ENCODE measurements at regions of chr6 and their contacts with region 1.

Region 1: GRCh38 chr6:28981833-28982475 is 23.2 kb downstream of the ZNF311 start:
- DNase-seq: peak; percentile 82
- ATAC-seq: peak; percentile 27
- H3K4me3 ChIP-seq: peak overlapping the region; percentile 92
- H3K27ac ChIP-seq: peak overlapping the region; percentile 11; the same call in 1 of the 2 replicates
- H3K4me1 ChIP-seq: peaks cover 39% of the 10 kb centered on the region
- H3K27me3 ChIP-seq: no peaks in the 10 kb centered on the region
- CTCF ChIP-seq: no peak

Region 2: GRCh38 chr6:28863604-28864320 is 118.2 kb before region 1 on chr6:
- CTCF ChIA-PET with region 1: no interaction called
- POLR2A ChIA-PET with region 1: no interaction called
- intact Hi-C with region 1: loop called (anchors 2 kb)
- DNase-seq: peak; percentile 91
- ATAC-seq: peak; percentile 61
- H3K4me3 ChIP-seq: peak overlapping the region; percentile 87
- H3K27ac ChIP-seq: peak overlapping the region; percentile 22; the same call in 1 of the 2 replicates
- H3K4me1 ChIP-seq: peaks cover 29% of the 10 kb centered on the region
- H3K27me3 ChIP-seq: no peaks in the 10 kb centered on the region
- CTCF ChIP-seq: no peak

Region 3: GRCh38 chr6:28895134-28895812 is 86.7 kb before region 1 on chr6:
- CTCF ChIA-PET with region 1: interaction called, 3 read pairs
- POLR2A ChIA-PET with region 1: interaction called, 9 read pairs
- intact Hi-C with region 1: loop called (anchors 1 kb)
- DNase-seq: peak; percentile 98
- ATAC-seq: peak; percentile 62
- H3K4me3 ChIP-seq: peak overlapping the region; percentile 83
- H3K27ac ChIP-seq: peak overlapping the region; percentile 80
- H3K4me1 ChIP-seq: peaks cover 10% of the 10 kb centered on the region
- H3K27me3 ChIP-seq: no peaks in the 10 kb centered on the region
- CTCF ChIP-seq: no peak

Region 4: DNA sequence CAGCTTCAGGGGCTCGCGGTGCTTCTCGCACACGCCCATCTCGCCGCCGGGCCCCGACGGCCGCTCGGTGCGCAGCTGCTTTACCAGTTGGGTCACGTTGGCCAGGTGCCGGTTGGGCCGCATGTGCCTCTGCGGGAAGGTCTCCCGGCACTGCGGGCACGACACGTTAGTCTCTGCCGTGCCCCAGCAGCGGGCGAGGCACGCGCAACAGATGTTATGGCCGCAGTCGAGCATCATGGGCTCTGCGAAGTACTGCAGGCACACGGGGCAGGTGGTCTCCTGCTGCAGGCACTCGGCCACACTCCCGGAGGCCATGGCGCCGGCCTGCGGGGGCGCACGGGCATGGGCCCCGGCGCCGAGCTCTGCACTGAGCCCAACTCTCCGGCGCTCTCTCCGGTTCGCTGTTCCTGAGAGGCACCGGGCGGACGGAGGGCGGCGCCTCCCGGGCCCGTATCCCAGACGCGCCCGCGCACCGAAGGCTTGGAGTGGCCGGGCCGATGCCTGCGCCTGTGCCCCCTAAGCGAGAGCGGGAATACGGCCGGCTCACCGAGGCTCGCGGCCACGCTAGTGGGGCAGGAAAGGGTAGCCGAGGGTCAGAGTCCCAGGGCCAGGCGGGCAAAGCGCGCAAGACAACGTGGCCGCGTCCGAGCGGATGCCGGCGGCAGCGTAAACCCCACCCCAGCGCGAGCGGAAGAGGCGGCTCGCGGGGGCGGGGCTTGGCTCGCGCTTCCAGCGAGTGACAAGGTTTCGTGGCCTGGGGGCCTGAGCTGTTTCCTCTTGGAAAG is 58.4 kb before region 1 on chr6 and contains the start of gene TRIM27:
- CTCF ChIA-PET with region 1: no interaction called
- POLR2A ChIA-PET with region 1: no interaction called
- intact Hi-C with region 1: loop called (anchors 1 kb)
- DNase-seq: peak; percentile 95
- ATAC-seq: peak; percentile 72
- H3K4me3 ChIP-seq: peak within 1 kb of the TSS; percentile 86
- H3K27ac ChIP-seq: peak within 1 kb of the TSS; percentile 82
- H3K4me1 ChIP-seq: peaks cover 23% of the 10 kb centered on the region
- H3K27me3 ChIP-seq: no peaks in the 10 kb centered on the region
- CTCF ChIP-seq: no peak
- total RNA-seq, gene TRIM27: 85.8 and 92.5 TPM in 2 replicates

Region 5: DNA sequence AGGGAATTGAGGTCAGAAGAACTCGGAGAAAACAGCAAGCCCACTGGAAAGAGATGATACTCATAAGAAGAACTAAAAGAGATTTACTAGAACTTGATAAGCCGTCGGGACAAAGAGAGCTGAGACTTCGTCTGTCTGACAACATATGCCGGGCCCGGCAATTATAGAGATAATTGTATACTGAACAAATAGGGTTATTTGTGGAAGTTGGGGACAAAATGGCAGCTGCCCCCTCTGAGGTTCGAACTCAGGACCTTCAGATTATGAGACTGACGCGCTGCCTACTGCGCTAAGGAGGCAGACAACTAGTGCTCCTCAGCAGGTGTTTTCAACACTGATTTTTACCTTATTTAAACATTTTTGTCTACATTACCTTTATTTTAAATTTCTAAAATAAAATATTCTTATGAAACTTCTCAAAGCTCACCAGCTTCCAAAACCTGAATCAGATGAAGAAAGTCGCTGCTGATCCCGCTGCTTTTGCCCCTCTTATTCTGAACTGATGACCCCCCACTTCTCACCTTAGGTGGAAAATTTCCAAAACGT is 28.8 kb before region 1 on chr6:
- CTCF ChIA-PET with region 1: interaction called, 4 read pairs
- POLR2A ChIA-PET with region 1: interaction called, 7 read pairs
- intact Hi-C with region 1: loop called (anchors 1 kb)
- DNase-seq: peak; percentile 85
- ATAC-seq: peak; percentile 73
- H3K4me3 ChIP-seq: peak overlapping the region; percentile 82
- H3K27ac ChIP-seq: 0 out of 2 replicates have a peak overlapping the region, but pooled peaks have one; percentile 13
- H3K4me1 ChIP-seq: peaks cover 14% of the 10 kb centered on the region
- H3K27me3 ChIP-seq: no peaks in the 10 kb centered on the region
- CTCF ChIP-seq: no peak

Region 6: GRCh38 chr6:29011276-29011734 is 29.4 kb after region 1 on chr6:
- CTCF ChIA-PET with region 1: no interaction called
- POLR2A ChIA-PET with region 1: no interaction called
- intact Hi-C with region 1: loop called (anchors 1 kb)
- DNase-seq: peak; percentile 53
- ATAC-seq: peak; percentile 85
- H3K4me3 ChIP-seq: peak overlapping the region; percentile 72
- H3K27ac ChIP-seq: no peak overlapping the region
- H3K4me1 ChIP-seq: 0 out of 2 replicates have a peak, but pooled peaks cover 4% of the 10 kb centered on the region
- H3K27me3 ChIP-seq: no peaks in the 10 kb centered on the region
- CTCF ChIP-seq: no peak

Region 7: DNA sequence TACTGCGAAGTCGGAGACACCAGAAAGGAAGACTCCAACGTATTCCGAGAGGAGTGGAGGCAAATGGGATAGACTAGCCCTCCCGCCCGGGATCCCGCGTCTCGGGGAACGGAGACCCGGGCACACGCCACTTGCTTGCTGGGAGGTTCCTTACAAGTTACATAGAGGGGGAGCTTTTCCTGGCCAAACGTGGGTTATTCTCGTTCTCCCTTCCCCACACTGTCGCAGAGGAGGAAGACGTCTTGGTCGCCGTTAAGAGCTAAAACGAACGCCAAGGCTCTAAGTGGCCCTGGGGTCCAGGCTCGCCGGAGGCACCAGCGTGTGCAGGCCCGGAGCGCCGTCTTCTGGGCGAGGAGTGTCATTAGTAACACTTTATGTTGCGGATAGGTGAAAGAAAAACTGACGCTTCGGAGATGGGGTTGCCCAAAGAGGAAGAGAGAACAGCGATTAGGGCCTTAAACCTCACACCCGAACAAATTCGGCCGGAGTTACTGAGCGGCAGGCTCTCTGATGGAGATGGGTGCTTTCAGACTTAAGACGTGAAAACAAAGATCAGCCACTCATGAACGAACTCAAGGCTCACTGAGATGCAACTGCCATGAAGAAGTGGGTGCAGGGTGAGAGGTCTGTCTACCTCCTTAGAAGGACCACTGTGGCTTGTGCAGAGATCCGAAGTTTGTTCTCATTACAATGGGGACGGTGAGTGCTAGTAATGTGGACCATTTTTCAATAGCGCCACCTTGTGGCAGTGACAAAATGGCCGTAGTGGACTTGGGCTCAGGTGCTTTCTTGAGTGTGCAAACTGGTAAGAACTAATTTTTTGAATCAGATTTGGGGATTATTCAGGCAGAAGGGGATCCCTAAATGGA is 34.8 kb after region 1 on chr6:
- CTCF ChIA-PET with region 1: no interaction called
- POLR2A ChIA-PET with region 1: no interaction called
- intact Hi-C with region 1: loop called (anchors 1 kb)
- DNase-seq: peak; percentile 91
- ATAC-seq: peak; percentile 90
- H3K4me3 ChIP-seq: peak overlapping the region; percentile 94
- H3K27ac ChIP-seq: no peak overlapping the region
- H3K4me1 ChIP-seq: no peaks in the 10 kb centered on the region
- H3K27me3 ChIP-seq: no peaks in the 10 kb centered on the region
- CTCF ChIP-seq: peak; percentile 96

Measured in PC-3 (cell line).